Prostate gland (tissue), 2 donors: ENCODE measurements at regions of chr6 and their contacts with region 1.

Region 1: GRCh38 chr6:130632277-130632676 is 194.9 kb upstream of the SMLR1 start:
- DNase-seq: no peak
- H3K4me3 ChIP-seq: no peak overlapping the region
- H3K27ac ChIP-seq: no peak overlapping the region
- H3K4me1 ChIP-seq: no peaks in the 10 kb centered on the region
- H3K27me3 ChIP-seq: no peaks in the 10 kb centered on the region
- CTCF ChIP-seq: no peak
- POLR2A ChIP-seq: no peak

Region 2: DNA sequence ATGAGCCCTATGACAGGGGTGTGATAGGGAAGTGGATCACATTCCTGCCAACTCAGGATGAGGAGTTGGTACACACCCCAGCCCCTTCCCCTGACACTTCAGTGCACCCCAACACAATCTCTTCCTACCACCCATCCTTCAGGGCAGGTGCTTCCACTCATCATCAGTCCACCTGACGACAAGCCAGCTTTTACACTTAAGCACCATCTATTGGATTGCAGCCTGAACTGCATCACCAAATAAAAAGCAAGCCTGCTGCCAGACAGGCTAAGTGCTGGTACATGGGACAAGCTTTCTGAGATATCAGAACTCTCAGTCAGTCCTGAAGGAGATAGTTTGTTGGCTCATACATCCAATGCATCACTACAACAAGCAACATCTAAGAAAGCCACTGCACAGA is 335.4 kb before region 1 on chr6:
- intact Hi-C with region 1: no loop called
- DNase-seq: no peak
- H3K4me3 ChIP-seq: no peak overlapping the region
- H3K27ac ChIP-seq: no peak overlapping the region
- H3K4me1 ChIP-seq: no peaks in the 10 kb centered on the region
- H3K27me3 ChIP-seq: no peaks in the 10 kb centered on the region
- CTCF ChIP-seq: no peak
- POLR2A ChIP-seq: no peak

Region 3: GRCh38 chr6:130697995-130698535 is 65.8 kb after region 1 on chr6:
- intact Hi-C with region 1: loop called (anchors 10 kb)
- DNase-seq: no peak
- H3K4me3 ChIP-seq: no peak overlapping the region
- H3K27ac ChIP-seq: no peak overlapping the region
- H3K4me1 ChIP-seq: no peaks in the 10 kb centered on the region
- H3K27me3 ChIP-seq: no peaks in the 10 kb centered on the region
- CTCF ChIP-seq: peak in 3 of 4 experiments; percentile 22 to 35 (median 25)
- POLR2A ChIP-seq: no peak

Region 4: GRCh38 chr6:131431718-131432117 is 799.4 kb after region 1 on chr6:
- intact Hi-C with region 1: no loop called
- DNase-seq: no peak
- H3K4me3 ChIP-seq: no peak overlapping the region
- H3K27ac ChIP-seq: no peak overlapping the region
- H3K4me1 ChIP-seq: no peaks in the 10 kb centered on the region
- H3K27me3 ChIP-seq: no peaks in the 10 kb centered on the region
- CTCF ChIP-seq: no peak
- POLR2A ChIP-seq: no peak